PC-3 (cell line): ENCODE measurements at regions of chr2 and their contacts with region 1.

Region 1: GRCh38 chr2:187138265-187138664 is 289.3 kb upstream of the ZSWIM2 start:
- DNase-seq: peak; percentile 52
- ATAC-seq: peak; percentile 82
- H3K4me3 ChIP-seq: no peak overlapping the region
- H3K27ac ChIP-seq: no peak overlapping the region
- H3K4me1 ChIP-seq: no peaks in the 10 kb centered on the region
- H3K27me3 ChIP-seq: peaks cover under 1% of the 10 kb centered on the region; the same call in 1 of the 2 replicates
- CTCF ChIP-seq: peak; percentile 73

Region 2: DNA sequence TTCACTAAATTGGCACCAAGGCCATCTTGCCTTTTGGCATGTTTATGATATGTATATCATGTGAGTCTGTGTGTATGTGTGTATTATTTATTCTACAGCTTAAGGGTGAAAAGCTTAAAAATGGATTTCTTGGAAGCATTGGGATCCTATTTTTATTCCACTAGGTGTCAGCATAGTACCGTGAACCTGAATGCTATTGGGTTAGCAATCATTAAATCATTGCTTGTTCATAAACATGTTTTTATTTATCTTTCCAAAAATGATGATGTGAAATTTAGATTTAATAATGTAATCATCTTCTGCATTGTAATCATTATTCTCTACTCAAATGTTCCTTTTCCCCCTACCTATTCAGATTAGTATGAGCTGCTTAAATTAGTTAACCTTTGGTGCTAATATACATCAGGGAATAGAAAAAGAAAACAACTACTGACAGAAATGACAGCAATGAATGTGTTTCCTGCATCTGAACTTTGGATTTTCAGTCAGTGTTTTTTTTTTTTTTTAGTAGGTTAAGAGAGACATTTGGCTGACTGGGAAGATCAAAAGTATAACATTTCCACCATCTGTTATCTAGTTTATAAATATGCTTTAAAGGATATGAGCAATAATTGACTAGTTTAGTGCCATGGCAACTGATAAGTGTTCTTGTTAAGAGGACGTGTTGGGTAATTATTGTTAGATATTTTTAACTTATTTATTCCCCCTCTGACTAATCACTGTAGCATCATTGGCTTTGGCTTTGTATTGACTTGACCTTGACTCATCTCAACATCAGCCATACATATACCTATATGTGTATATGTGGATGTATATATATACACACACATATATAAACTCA is 275.2 kb before region 1 on chr2:
- CTCF ChIA-PET with region 1: no interaction called
- POLR2A ChIA-PET with region 1: no interaction called
- intact Hi-C with region 1: loop called (anchors 1 kb)
- DNase-seq: peak; percentile 71
- ATAC-seq: peak; percentile 78
- H3K4me3 ChIP-seq: no peak overlapping the region
- H3K27ac ChIP-seq: no peak overlapping the region
- H3K4me1 ChIP-seq: no peaks in the 10 kb centered on the region
- H3K27me3 ChIP-seq: peaks cover 3% of the 10 kb centered on the region; the same call in 1 of the 2 replicates
- CTCF ChIP-seq: peak; percentile 89

Region 3: GRCh38 chr2:186903216-186903615 is 235.0 kb before region 1 on chr2:
- CTCF ChIA-PET with region 1: no interaction called
- POLR2A ChIA-PET with region 1: no interaction called
- intact Hi-C with region 1: loop called (anchors 2 kb)
- DNase-seq: peak; percentile 38
- ATAC-seq: no peak
- H3K4me3 ChIP-seq: no peak overlapping the region
- H3K27ac ChIP-seq: no peak overlapping the region
- H3K4me1 ChIP-seq: no peaks in the 10 kb centered on the region
- H3K27me3 ChIP-seq: no peaks in the 10 kb centered on the region
- CTCF ChIP-seq: peak; percentile 75

Region 4: DNA sequence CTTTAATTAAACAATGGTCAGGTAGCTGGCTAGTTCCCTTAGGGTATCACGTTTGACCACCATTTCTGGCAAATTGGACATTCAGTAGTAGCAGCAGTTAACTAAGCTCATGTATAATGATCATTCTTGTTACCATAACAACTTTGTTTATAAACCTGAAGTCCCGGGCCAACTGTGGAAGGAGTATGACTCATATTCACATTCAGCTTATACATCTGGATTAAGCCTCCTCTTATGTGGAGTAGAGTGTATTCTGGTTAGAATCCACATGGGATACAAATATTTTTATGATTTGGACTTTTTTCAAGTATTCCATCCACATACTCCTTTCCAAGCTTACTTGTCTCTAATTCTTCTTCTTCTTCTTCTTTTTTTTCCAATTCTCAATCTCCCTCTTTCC is 219.0 kb before region 1 on chr2:
- CTCF ChIA-PET with region 1: interaction called, 15 read pairs
- POLR2A ChIA-PET with region 1: no interaction called
- intact Hi-C with region 1: no loop called
- DNase-seq: peak; percentile 72
- ATAC-seq: peak; percentile 95
- H3K4me3 ChIP-seq: no peak overlapping the region
- H3K27ac ChIP-seq: no peak overlapping the region
- H3K4me1 ChIP-seq: peaks cover 7% of the 10 kb centered on the region; the same call in 1 of the 2 replicates
- H3K27me3 ChIP-seq: no peaks in the 10 kb centered on the region
- CTCF ChIP-seq: no peak

Region 5: DNA sequence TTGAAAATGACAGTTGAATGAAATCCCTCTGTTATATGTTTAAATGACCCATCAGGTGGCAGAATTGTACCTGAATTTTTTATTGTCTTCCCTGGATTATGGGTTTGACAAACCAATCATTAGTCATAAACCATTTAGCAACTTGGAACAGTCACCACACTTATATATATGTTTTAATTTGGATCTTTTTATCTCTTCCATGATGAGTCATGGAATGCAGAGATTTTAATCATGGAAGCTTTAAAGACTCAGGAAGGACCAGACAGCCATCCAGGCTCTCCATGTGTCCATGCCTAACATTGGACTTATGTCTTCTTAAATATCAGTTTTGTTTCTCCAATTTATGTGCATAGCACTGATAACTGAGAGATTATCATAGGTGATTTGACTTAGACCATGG is 101.0 kb before region 1 on chr2:
- CTCF ChIA-PET with region 1: interaction called, 11 read pairs
- POLR2A ChIA-PET with region 1: no interaction called
- intact Hi-C with region 1: no loop called
- DNase-seq: peak; percentile 51
- ATAC-seq: peak; percentile 50
- H3K4me3 ChIP-seq: no peak overlapping the region
- H3K27ac ChIP-seq: no peak overlapping the region
- H3K4me1 ChIP-seq: peaks cover 9% of the 10 kb centered on the region
- H3K27me3 ChIP-seq: no peaks in the 10 kb centered on the region
- CTCF ChIP-seq: 0 out of 2 replicates have a peak, but pooled peaks have one; percentile 11

Region 6: GRCh38 chr2:187098154-187098553 is 40.1 kb before region 1 on chr2:
- CTCF ChIA-PET with region 1: no interaction called
- POLR2A ChIA-PET with region 1: no interaction called
- intact Hi-C with region 1: no loop called
- DNase-seq: no peak
- ATAC-seq: no peak
- H3K4me3 ChIP-seq: no peak overlapping the region
- H3K27ac ChIP-seq: no peak overlapping the region
- H3K4me1 ChIP-seq: no peaks in the 10 kb centered on the region
- H3K27me3 ChIP-seq: 0 out of 2 replicates have a peak, but pooled peaks cover 5% of the 10 kb centered on the region
- CTCF ChIP-seq: no peak

Region 7: GRCh38 chr2:187150670-187151069 is 12.4 kb after region 1 on chr2:
- CTCF ChIA-PET with region 1: no interaction called
- POLR2A ChIA-PET with region 1: no interaction called
- intact Hi-C with region 1: no loop called
- DNase-seq: no peak
- ATAC-seq: peak; percentile 79
- H3K4me3 ChIP-seq: no peak overlapping the region
- H3K27ac ChIP-seq: no peak overlapping the region
- H3K4me1 ChIP-seq: no peaks in the 10 kb centered on the region
- H3K27me3 ChIP-seq: 0 out of 2 replicates have a peak, but pooled peaks cover 2% of the 10 kb centered on the region
- CTCF ChIP-seq: no peak

Region 8: GRCh38 chr2:187299122-187299906 is 161.0 kb after region 1 on chr2:
- CTCF ChIA-PET with region 1: no interaction called
- POLR2A ChIA-PET with region 1: no interaction called
- intact Hi-C with region 1: loop called (anchors 5 kb)
- DNase-seq: peak; percentile 27
- ATAC-seq: peak; percentile 27; the same call in 1 of the 2 replicates
- H3K4me3 ChIP-seq: no peak overlapping the region
- H3K27ac ChIP-seq: no peak overlapping the region
- H3K4me1 ChIP-seq: no peaks in the 10 kb centered on the region
- H3K27me3 ChIP-seq: no peaks in the 10 kb centered on the region
- CTCF ChIP-seq: peak; percentile 59

Region 9: GRCh38 chr2:187453078-187453641 is 314.9 kb after region 1 on chr2:
- CTCF ChIA-PET with region 1: interaction called, 4 read pairs
- POLR2A ChIA-PET with region 1: no interaction called
- intact Hi-C with region 1: loop called (anchors 1 kb)
- DNase-seq: peak; percentile 50
- ATAC-seq: no peak
- H3K4me3 ChIP-seq: no peak overlapping the region
- H3K27ac ChIP-seq: no peak overlapping the region
- H3K4me1 ChIP-seq: no peaks in the 10 kb centered on the region
- H3K27me3 ChIP-seq: no peaks in the 10 kb centered on the region
- CTCF ChIP-seq: peak; percentile 72